ENCODE measurements at regions of chr20 and their contacts with region 1.

Region 1: DNA sequence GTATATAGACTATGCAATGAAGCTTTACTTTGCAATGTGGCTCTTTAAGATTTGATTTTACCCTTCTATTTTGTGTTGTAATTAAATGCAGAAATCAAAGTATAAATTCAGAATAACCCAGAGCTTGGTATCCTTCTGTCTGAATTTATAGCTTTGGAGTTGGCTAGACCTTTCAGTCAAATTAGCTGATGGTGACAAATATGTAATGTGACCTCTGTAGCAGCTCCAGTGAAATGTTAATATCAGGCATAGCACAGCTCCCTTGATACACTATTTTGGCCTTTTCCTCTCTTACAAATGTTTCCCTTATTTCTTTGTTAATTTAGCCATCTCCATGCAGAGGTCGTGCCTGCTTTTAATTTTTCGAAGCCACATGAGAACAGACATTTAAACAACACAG is 11.1 kb downstream of the CBFA2T2 start:
- DNase-seq: no peak
- H3K27ac ChIP-seq: no peak overlapping the region
- CTCF ChIP-seq: no peak

Region 2: GRCh38 chr20:33489495-33490022 is 11.4 kb before region 1 on chr20:
- CTCF ChIA-PET with region 1: interaction called, 10 read pairs
- POLR2A ChIA-PET with region 1: no interaction called
- DNase-seq: peak; percentile 100
- H3K27ac ChIP-seq: peak overlapping the region; percentile 89
- CTCF ChIP-seq: no peak

Region 3: DNA sequence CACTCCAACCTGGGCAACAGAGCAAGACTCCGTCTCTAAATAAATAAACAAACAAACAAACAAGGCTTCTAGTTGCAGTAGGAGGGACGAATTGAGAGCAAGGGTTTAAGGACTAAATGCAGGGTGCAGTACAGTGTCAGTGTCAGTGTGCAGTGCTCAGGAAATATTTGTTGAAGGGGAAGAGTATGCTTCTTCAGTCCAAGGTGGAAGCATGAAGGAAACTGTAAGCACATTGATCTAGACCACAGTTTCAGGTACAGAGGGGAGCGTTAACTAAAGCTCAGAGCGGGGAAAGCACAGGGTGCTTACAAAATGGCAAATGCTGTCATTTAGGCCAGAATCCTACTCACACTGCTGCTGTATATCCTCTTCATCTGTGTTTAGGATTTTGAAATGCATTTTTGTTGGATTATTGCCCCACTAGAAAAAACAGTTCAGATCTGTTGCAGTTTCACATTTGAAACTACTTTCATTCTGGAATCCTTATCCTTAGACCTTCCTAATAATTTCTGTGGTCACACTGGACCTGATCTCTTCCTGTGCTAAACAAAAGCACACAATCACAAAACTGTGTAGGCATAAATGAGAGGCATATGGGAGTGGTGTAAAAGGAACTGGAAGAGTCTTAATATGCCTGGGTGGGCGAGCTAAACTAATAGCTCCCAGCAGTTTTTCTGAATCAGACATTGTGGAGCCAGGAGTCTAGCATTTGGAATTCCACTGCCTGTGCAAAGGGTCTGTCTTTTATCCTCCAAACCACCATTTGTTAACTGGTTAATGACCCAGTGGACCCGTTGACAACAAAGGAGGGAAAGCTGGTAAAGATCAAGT is 30.3 kb after region 1 on chr20:
- CTCF ChIA-PET with region 1: no interaction called
- POLR2A ChIA-PET with region 1: no interaction called
- DNase-seq: no peak
- H3K27ac ChIP-seq: no peak overlapping the region
- CTCF ChIP-seq: no peak